Aorta (tissue), 5 donors: ENCODE measurements at regions of chr11 and their contacts with region 1.

Region 1: DNA sequence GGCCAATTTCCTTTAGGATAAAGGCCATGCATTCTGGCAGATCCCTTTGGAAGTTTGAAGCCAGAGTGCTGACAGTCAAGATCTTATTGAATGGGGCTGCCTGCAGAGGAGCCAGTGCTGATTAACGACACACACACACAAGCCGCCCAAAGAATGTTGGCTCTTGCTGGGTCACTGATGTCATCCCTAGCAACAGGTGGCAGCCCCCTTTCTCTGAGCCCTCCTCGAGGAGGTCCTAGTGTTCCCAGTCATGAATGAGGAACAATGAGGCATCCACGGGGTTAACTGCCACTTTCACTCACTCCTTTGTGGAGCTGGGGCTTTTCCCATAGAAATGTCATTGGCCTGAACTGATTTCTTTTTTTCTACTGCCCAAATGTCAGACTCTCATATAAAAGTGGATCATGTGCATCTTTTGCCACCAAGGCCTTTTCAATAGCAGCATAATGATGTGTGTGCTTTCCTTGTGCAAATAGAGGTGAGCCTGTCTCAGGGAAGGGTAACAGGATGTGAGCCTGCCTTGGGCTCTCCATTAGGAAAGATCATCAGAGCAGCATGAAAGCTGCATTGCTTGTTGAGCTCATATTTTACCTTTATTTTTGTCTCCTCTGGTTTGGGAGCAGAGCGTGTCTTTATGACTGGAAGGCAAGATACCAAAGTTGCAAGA is 301.8 kb upstream of the MTNR1B start:
- DNase-seq: no peak
- ATAC-seq: no peak
- H3K4me3 ChIP-seq: no peak overlapping the region
- H3K27ac ChIP-seq: no peak overlapping the region
- H3K4me1 ChIP-seq: peaks cover 4% of the 10 kb centered on the region in 2 donors
- H3K27me3 ChIP-seq: no peaks in the 10 kb centered on the region

Region 2: GRCh38 chr11:92728628-92729027 is 61.0 kb after region 1 on chr11:
- intact Hi-C with region 1: loop called in 1 of 2 experiments (anchors 10 kb)
- DNase-seq: no peak
- ATAC-seq: no peak
- H3K4me3 ChIP-seq: no peak overlapping the region
- H3K27ac ChIP-seq: no peak overlapping the region
- H3K4me1 ChIP-seq: no peaks in the 10 kb centered on the region
- H3K27me3 ChIP-seq: no peaks in the 10 kb centered on the region